PC-3 (cell line): ENCODE measurements at regions of chr1 and their contacts with region 1.

Region 1: DNA sequence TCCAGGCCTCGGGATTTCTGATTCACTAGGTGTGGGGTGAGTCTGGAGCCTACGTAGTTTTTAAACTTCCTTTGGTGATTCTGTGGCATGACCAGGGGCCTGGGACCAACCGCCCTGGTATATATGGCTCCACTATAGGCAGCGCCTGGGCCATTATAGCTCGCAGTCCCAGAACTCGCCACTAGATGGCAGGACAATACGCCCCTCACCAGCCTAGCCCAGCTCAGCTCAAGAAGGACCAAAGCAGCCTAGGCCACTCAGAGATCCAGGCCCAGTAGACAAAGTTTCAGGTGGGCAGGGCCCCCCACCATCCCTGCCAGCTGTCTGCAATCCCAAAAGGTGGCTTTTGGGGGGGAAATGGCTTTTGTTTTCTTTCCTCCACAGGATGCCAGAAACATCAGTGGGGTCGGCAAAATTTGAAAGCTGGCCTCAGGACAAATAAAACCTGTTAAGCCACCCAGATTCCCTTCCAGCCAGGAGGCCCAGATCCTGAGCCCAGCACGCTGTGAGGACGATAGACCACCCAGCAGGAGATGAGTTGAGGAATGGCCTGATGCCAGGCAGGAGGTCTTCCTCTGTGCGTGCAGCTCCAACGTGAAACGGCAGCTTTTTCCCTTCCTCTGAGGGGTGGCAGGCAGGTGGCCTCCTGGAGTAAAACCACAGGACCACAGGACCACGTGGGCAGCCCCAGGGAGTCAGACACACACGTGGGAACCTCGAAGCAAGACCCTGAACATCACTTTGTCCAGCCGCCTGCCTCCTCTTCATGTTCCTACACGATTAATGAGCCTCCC is 24.8 kb upstream of the TMEM51 start:
- DNase-seq: peak; percentile 87
- ATAC-seq: peak; percentile 100
- H3K4me3 ChIP-seq: no peak overlapping the region
- H3K27ac ChIP-seq: no peak overlapping the region
- H3K4me1 ChIP-seq: no peaks in the 10 kb centered on the region
- H3K27me3 ChIP-seq: no peaks in the 10 kb centered on the region
- CTCF ChIP-seq: peak; percentile 92

Region 2: DNA sequence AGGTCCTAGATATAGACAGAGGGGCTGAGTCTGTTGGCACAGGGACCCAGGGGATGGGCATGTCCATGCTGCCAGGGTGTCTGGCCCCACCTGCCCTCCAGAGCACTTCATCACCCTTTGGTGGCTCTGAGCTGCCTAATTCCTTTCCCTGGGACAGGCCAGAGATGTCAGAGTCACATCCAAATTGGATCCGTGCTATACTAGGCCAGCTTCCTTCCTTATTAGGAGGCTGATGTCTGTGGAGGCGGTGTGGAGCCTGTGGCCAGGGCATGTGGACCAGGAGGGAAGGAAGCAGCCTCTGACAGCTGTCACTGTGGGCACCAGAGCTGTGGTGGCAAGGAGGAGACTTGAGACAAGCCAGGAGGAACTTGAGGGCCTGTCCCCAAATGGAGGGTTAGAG is 52.9 kb before region 1 on chr1:
- CTCF ChIA-PET with region 1: no interaction called
- POLR2A ChIA-PET with region 1: no interaction called
- intact Hi-C with region 1: no loop called
- DNase-seq: no peak
- ATAC-seq: no peak
- H3K4me3 ChIP-seq: no peak overlapping the region
- H3K27ac ChIP-seq: no peak overlapping the region
- H3K4me1 ChIP-seq: no peaks in the 10 kb centered on the region
- H3K27me3 ChIP-seq: no peaks in the 10 kb centered on the region
- CTCF ChIP-seq: no peak

Region 3: DNA sequence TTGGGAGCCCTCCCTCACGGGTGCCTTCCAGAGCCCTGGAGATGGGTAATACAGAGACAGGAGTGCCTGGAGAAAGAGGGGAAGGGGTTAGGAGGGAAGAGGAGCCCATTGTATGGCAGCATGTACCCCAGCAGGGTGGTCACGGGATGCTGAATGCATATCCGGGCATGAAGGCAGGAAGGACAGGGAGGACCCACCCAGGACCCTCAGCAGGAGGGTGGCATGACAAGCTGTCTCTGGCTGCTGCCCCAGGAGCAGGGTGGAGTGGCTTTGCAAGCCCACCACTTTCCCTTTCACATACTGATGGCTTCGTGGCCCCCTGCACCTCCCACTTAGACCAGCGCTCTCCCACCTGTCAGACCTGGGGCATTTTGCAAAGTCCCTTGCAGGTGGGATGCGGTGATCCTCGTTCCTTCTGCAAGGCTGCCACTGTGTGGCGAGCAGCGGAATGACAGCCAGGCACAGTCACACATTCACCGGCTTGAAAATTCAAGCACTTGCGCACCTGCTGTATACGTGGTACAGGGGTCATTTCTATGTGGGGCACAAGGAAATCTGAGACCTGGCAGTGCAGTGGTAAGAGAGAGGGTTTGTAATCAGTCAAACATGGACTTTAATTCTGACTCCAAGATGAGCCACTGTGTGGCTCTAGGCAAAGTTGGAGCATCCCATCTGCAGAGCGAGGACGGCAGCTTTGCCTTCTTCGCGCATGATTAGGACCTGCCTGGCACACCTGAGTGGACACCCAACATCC is 28.4 kb before region 1 on chr1:
- CTCF ChIA-PET with region 1: no interaction called
- POLR2A ChIA-PET with region 1: no interaction called
- intact Hi-C with region 1: no loop called
- DNase-seq: peak; percentile 71
- ATAC-seq: peak; percentile 80
- H3K4me3 ChIP-seq: no peak overlapping the region
- H3K27ac ChIP-seq: no peak overlapping the region
- H3K4me1 ChIP-seq: no peaks in the 10 kb centered on the region
- H3K27me3 ChIP-seq: no peaks in the 10 kb centered on the region
- CTCF ChIP-seq: peak; percentile 92

Region 4: DNA sequence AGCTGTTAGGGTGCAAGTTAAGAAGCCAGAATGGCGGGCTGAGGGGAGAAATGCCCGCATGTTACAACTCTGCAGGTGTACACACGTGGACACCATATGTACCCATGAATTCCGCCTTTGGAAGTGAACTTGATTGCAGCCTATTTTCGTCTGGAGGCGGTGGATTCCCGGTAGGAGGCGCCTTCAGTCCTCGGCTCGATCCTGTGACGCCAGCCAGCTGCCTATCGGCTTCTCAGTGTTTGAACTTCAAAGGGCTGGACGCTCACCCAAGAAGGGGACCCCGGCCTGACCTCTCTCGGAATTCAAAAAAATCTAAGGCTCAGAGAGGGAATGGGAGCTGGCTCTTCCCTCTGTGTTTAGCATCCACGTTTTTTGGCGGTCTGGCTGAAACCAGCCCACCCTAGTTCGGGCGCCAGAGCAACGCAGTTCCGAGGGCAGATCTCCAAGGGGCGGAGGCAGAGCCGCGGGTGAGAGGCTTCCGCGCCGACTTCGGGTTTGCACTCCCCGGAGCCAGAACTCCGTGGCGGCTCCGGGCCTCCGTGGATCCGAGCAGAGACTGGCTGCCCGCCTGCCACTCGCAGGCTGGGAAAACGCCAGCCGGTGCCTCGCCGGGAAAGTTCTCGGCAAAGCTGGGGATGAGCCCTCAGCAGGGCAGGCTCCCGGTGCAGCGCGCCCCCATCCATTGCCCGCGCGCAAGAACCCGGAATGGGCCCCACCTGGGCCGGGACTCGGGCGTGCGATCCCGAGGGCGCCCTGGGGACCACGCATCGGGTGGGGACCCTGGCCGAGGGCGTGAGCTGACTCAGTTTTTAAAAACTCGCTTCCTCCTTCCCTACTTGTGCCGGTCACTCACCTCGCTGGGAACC is 23.8 kb after region 1 on chr1:
- CTCF ChIA-PET with region 1: interaction called, 6 read pairs
- POLR2A ChIA-PET with region 1: interaction called, 4 read pairs
- intact Hi-C with region 1: loop called (anchors 2 kb)
- DNase-seq: peak; percentile 89
- ATAC-seq: peak; percentile 52
- H3K4me3 ChIP-seq: peak overlapping the region; percentile 76
- H3K27ac ChIP-seq: peak overlapping the region; percentile 67
- H3K4me1 ChIP-seq: peaks cover 21% of the 10 kb centered on the region
- H3K27me3 ChIP-seq: no peaks in the 10 kb centered on the region
- CTCF ChIP-seq: peak; percentile 80

Region 5: GRCh38 chr1:15178571-15179484 is 50.1 kb after region 1 on chr1:
- CTCF ChIA-PET with region 1: no interaction called
- POLR2A ChIA-PET with region 1: interaction called, 4 read pairs
- intact Hi-C with region 1: loop called (anchors 1 kb)
- DNase-seq: peak; percentile 94
- ATAC-seq: peak; percentile 92
- H3K4me3 ChIP-seq: peak overlapping the region; percentile 22; the same call in 1 of the 2 replicates
- H3K27ac ChIP-seq: peak overlapping the region; percentile 95
- H3K4me1 ChIP-seq: peaks cover 48% of the 10 kb centered on the region
- H3K27me3 ChIP-seq: no peaks in the 10 kb centered on the region
- CTCF ChIP-seq: no peak

Region 6: DNA sequence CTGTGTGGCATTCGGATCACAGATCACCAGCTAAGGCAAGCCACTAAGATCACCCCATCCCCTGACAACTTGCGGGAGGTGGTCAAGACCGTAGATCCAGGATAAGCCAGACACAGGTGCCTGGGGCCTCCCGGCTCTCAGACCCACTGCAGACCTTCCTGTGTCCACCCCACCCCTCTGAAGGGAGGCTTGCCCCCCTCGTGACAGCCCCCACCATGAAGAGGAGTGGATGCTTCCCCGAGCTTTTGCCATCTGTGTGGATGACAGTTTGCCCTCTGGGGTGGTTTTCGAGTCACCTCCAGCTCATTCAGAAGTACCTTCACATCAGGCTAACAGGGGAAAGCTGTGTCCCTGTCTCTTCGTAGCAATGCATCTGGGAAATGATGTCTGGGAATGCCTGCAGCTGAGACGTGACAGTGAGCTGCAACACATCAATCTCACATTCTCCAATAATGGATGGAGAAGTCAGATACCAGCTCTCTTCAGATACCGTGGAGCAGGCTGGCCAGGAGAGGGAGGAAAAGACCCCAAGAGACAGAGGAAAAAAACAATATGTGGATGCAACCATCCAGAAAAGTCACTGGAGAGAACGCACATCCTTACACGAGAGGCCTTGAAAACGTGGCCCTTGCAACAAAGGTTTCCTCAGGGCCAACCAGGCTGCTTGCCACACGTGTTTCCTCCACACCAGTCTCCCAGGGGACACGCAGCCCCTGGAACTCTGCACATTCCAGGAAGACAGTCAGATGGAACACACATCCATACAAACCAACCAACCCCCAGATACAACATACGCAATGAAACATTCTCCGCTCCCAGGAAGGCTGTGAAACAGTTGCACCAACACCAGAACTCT is 97.9 kb after region 1 on chr1:
- CTCF ChIA-PET with region 1: interaction called, 13 read pairs
- POLR2A ChIA-PET with region 1: no interaction called
- intact Hi-C with region 1: no loop called
- DNase-seq: no peak
- ATAC-seq: no peak
- H3K4me3 ChIP-seq: no peak overlapping the region
- H3K27ac ChIP-seq: no peak overlapping the region
- H3K4me1 ChIP-seq: peaks cover 10% of the 10 kb centered on the region; the same call in 1 of the 2 replicates
- H3K27me3 ChIP-seq: no peaks in the 10 kb centered on the region
- CTCF ChIP-seq: no peak

Region 7: GRCh38 chr1:15272009-15272788 is 143.5 kb after region 1 on chr1:
- CTCF ChIA-PET with region 1: interaction called, 18 read pairs
- POLR2A ChIA-PET with region 1: no interaction called
- intact Hi-C with region 1: loop called (anchors 1 kb)
- DNase-seq: peak; percentile 92
- ATAC-seq: peak; percentile 97
- H3K4me3 ChIP-seq: peak overlapping the region; percentile 69
- H3K27ac ChIP-seq: no peak overlapping the region
- H3K4me1 ChIP-seq: peaks cover 10% of the 10 kb centered on the region; the same call in 1 of the 2 replicates
- H3K27me3 ChIP-seq: no peaks in the 10 kb centered on the region
- CTCF ChIP-seq: peak; percentile 81

Region 8: GRCh38 chr1:15304701-15305467 is 176.2 kb after region 1 on chr1:
- CTCF ChIA-PET with region 1: interaction called, 4 read pairs
- POLR2A ChIA-PET with region 1: no interaction called
- intact Hi-C with region 1: loop called (anchors 1 kb)
- DNase-seq: peak; percentile 73
- ATAC-seq: peak; percentile 77
- H3K4me3 ChIP-seq: no peak overlapping the region
- H3K27ac ChIP-seq: no peak overlapping the region
- H3K4me1 ChIP-seq: no peaks in the 10 kb centered on the region
- H3K27me3 ChIP-seq: no peaks in the 10 kb centered on the region
- CTCF ChIP-seq: peak; percentile 98